ENCODE measurements at regions of chr1 and their contacts with region 1.

Region 1: GRCh38 chr1:233304489-233305102 is 9.1 kb upstream of the PCNX2 start:
- DNase-seq: peak in 1 of 2 donors; percentile 68
- ATAC-seq: peak in 1 of 3 donors; percentile 57
- H3K4me3 ChIP-seq: no peak overlapping the region
- H3K4me3 Mint-ChIP-seq: no peak overlapping the region
- H3K27ac ChIP-seq: no peak overlapping the region
- H3K27ac Mint-ChIP-seq: no peak overlapping the region
- H3K4me1 ChIP-seq: no peaks in the 10 kb centered on the region
- H3K4me1 Mint-ChIP-seq: no peaks in the 10 kb centered on the region
- H3K27me3 ChIP-seq: no peaks in the 10 kb centered on the region
- H3K27me3 Mint-ChIP-seq: peaks cover 11 to 29% of the 10 kb centered on the region in 2 donors
- CTCF ChIP-seq: peak; percentile 69

Region 2: GRCh38 chr1:233112186-233113008 is 192.2 kb before region 1 on chr1:
- intact Hi-C with region 1: no loop called
- DNase-seq: no peak
- ATAC-seq: no peak
- H3K4me3 ChIP-seq: no peak overlapping the region
- H3K4me3 Mint-ChIP-seq: peak overlapping the region; percentile 51
- H3K27ac ChIP-seq: no peak overlapping the region
- H3K27ac Mint-ChIP-seq: peak overlapping the region; percentile 29 to 81
- H3K4me1 ChIP-seq: no peaks in the 10 kb centered on the region
- H3K4me1 Mint-ChIP-seq: peaks cover 12 to 24% of the 10 kb centered on the region in 2 donors
- H3K27me3 ChIP-seq: no peaks in the 10 kb centered on the region
- H3K27me3 Mint-ChIP-seq: no peaks in the 10 kb centered on the region
- CTCF ChIP-seq: no peak

Region 3: DNA sequence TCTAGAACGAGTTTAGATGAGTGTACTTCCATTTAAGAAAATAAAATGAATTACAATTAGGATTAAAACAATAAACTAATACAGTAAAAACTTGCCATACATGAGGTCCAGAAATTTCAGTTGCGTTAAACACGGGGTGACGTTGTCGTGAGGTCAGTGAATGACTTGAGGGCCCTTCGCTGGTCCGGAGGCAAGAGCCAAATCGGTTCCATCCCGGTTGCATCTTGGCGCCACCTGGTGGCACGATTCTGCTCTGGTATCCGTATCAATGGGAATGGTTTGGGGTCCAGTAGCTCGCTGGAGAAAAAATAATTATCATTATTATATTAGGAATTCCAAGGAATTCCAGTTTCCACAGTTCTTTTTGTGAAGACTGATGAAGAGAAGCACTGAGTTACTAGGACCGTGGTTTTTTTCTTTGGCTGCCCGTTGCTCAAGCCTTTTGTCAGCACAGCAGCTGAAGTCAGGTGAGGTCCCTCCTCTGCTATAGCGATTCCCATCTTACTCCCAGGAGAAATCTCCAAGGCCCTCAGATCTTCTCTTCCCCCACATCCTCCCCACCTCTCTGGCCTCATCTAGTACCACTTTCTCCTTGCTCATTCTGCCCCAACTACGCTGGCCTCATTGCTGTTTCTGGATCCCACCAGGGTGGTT is 761.3 kb after region 1 on chr1:
- intact Hi-C with region 1: loop called (anchors 1 kb)
- DNase-seq: peak; percentile 41 to 76
- ATAC-seq: peak in 1 of 3 donors; percentile 55
- H3K4me3 ChIP-seq: no peak overlapping the region
- H3K4me3 Mint-ChIP-seq: no peak overlapping the region
- H3K27ac ChIP-seq: no peak overlapping the region
- H3K27ac Mint-ChIP-seq: no peak overlapping the region
- H3K4me1 ChIP-seq: no peaks in the 10 kb centered on the region
- H3K4me1 Mint-ChIP-seq: no peaks in the 10 kb centered on the region
- H3K27me3 ChIP-seq: no peaks in the 10 kb centered on the region
- H3K27me3 Mint-ChIP-seq: peaks cover 0 to 9% of the 10 kb centered on the region in 2 donors
- CTCF ChIP-seq: peak; percentile 64

Measured in natural killer cell (primary cell).